ENCODE measurements at regions of chr1 and their contacts with region 1.

Region 1: DNA sequence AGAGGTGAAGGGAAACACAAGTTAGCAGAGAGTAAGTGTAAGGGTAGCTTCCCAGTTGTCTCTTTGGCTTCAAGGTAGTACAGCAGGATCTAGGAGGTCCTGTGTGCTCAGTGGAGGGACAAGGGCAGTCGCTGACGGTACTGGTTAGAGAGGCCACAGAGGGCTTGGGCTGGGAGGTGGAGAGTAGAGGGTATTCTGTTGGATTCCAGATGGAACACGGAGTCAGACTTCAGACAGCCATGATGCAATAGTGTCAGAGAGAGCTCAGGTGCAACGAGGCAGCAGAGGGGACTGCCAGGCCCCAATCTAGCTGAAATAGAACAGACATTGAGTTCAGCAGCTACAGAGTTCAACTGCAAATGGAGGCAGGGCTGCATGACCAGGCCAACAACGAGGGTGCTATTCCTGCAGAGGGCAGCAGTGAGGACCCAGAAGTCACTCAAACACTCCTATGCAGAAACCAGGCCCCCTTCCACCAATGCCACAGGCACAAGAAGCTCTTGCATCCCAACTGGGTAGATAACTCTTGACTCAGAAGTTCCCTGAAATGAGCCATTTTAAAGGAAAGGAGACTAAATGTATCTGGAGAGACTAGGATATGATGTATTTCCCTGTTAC is 325.0 kb upstream of the ESRRG start:
- DNase-seq: peak; percentile 77
- ATAC-seq: peak; percentile 100
- H3K4me3 Mint-ChIP-seq: no peak overlapping the region
- H3K27ac Mint-ChIP-seq: no peak overlapping the region
- H3K4me1 Mint-ChIP-seq: no peaks in the 10 kb centered on the region
- H3K27me3 Mint-ChIP-seq: no peaks in the 10 kb centered on the region
- CTCF ChIP-seq: peak; percentile 46; the same call in 1 of the 2 replicates

Region 2: GRCh38 chr1:216447907-216448568 is 600.2 kb before region 1 on chr1:
- CTCF ChIA-PET with region 1: no interaction called
- POLR2A ChIA-PET with region 1: no interaction called
- DNase-seq: no peak
- ATAC-seq: no peak
- H3K4me3 Mint-ChIP-seq: no peak overlapping the region
- H3K27ac Mint-ChIP-seq: no peak overlapping the region
- H3K4me1 Mint-ChIP-seq: no peaks in the 10 kb centered on the region
- H3K27me3 Mint-ChIP-seq: no peaks in the 10 kb centered on the region
- CTCF ChIP-seq: no peak

Region 3: DNA sequence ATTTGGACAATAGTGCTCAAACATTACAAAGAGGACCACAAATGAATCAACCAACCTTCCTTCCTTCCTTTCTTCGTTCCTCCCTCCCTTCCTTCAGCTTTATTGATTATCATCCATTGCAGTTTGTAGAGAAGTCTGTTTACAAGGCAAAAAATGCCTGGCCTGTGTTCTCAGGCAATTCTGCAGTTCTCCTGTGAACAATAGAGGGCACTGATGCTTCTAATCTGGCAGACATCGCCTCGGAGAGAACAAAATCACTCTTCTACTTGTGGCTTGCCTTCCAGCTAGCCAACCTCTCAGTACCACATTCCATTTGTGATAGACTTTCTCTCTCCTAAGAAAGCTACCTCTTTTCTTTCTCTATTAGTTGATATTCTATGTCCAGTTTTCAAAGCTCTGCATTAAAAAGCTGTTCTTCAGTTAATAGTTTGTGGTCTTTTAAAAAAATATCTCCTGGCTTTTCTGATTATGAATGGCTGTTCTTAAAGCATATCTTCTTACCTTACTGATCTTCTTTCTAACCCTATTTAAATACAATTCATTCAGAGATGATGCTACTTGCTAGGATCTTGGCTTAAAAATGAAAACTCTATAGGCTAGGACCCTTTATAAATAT is 298.1 kb before region 1 on chr1:
- CTCF ChIA-PET with region 1: interaction called, 10 read pairs
- POLR2A ChIA-PET with region 1: no interaction called
- DNase-seq: peak; percentile 30
- ATAC-seq: peak; percentile 97
- H3K4me3 Mint-ChIP-seq: no peak overlapping the region
- H3K27ac Mint-ChIP-seq: no peak overlapping the region
- H3K4me1 Mint-ChIP-seq: peaks cover 8% of the 10 kb centered on the region
- H3K27me3 Mint-ChIP-seq: no peaks in the 10 kb centered on the region
- CTCF ChIP-seq: 0 out of 2 replicates have a peak, but pooled peaks have one; percentile 26

Region 4: GRCh38 chr1:217059404-217059803 is 11.2 kb after region 1 on chr1:
- CTCF ChIA-PET with region 1: interaction called, 10 read pairs
- POLR2A ChIA-PET with region 1: no interaction called
- DNase-seq: no peak
- ATAC-seq: peak; percentile 82
- H3K4me3 Mint-ChIP-seq: no peak overlapping the region
- H3K27ac Mint-ChIP-seq: no peak overlapping the region
- H3K4me1 Mint-ChIP-seq: peaks cover 4% of the 10 kb centered on the region
- H3K27me3 Mint-ChIP-seq: no peaks in the 10 kb centered on the region
- CTCF ChIP-seq: no peak

Region 5: DNA sequence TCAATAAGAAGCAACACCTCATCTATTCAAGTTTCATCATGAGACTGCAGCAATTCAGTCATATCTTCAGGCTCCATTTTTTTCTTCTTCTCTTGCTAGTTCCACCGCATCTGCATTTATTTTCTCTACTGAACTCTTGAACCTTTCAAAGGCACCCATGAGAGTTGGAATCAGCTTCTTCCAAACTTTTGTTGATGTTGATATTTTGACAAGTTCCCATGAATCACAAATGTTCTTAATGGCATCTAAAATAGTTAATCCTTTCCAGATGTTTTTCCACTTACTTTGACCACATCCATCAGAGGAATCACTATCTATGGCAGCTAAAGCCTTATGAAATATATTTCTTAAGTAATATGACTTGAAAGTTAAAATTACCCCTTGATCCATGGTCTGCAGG is 148.4 kb after region 1 on chr1:
- CTCF ChIA-PET with region 1: no interaction called
- POLR2A ChIA-PET with region 1: no interaction called
- DNase-seq: no peak
- ATAC-seq: no peak
- H3K4me3 Mint-ChIP-seq: no peak overlapping the region
- H3K27ac Mint-ChIP-seq: no peak overlapping the region
- H3K4me1 Mint-ChIP-seq: no peaks in the 10 kb centered on the region
- H3K27me3 Mint-ChIP-seq: no peaks in the 10 kb centered on the region
- CTCF ChIP-seq: no peak

Region 6: GRCh38 chr1:217333939-217334338 is 285.7 kb after region 1 on chr1:
- CTCF ChIA-PET with region 1: interaction called, 11 read pairs
- POLR2A ChIA-PET with region 1: no interaction called
- DNase-seq: peak; percentile 73
- ATAC-seq: peak; percentile 97
- H3K4me3 Mint-ChIP-seq: no peak overlapping the region
- H3K27ac Mint-ChIP-seq: no peak overlapping the region
- H3K4me1 Mint-ChIP-seq: peaks cover 12% of the 10 kb centered on the region
- H3K27me3 Mint-ChIP-seq: no peaks in the 10 kb centered on the region; the same call in 1 of the 2 replicates
- CTCF ChIP-seq: peak; percentile 59; the same call in 1 of the 2 replicates